Breast epithelium (tissue), 4 donors: ENCODE measurements at regions of chr1 and their contacts with region 1.

Region 1: DNA sequence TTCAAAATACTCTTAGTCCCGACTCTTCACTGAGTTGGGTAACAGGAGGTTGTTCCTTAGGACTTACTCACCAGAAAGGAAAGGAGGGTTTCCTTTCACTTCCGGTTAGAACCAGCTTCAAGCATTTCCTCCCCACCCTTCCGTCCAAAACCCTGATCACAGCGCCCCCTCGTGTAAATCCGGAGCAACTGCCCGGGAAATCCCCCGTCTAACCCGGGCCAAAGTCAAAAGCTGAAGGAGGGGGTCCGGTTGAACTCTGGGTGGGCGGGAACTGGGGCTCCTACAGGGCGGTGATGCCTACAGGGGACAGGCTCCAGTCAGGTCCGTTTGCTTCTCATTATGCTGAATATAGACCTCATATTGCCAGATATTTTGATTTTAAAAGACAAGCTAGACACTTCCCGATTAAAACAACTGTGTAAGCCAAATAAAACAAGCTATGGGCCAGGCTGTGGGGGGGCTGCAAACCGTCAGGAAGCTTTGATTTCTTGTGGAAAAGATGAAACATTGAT is 15.0 kb upstream of the MTARC2 start:
- DNase-seq: peak; percentile 47 to 78
- H3K4me3 ChIP-seq: peak overlapping the region; percentile 15 to 59 (median 32)
- H3K27ac ChIP-seq: peak overlapping the region; percentile 72 to 90
- H3K4me1 ChIP-seq: no peaks in the 10 kb centered on the region
- H3K27me3 ChIP-seq: no peaks in the 10 kb centered on the region
- CTCF ChIP-seq: peak; percentile 82 to 89 (median 87)
- POLR2A ChIP-seq: no peak

Region 2: GRCh38 chr1:220690140-220691025 is 42.8 kb before region 1 on chr1 and contains the start of gene C1orf115:
- intact Hi-C with region 1: loop called (anchors 5 kb)
- DNase-seq: peak; percentile 62 to 82
- H3K4me3 ChIP-seq: peak within 1 kb of the TSS; percentile 69 to 88 (median 78)
- H3K27ac ChIP-seq: peak within 1 kb of the TSS; percentile 75 to 80
- H3K4me1 ChIP-seq: peaks cover 3 to 4% of the 10 kb centered on the region in 2 donors
- H3K27me3 ChIP-seq: no peaks in the 10 kb centered on the region
- CTCF ChIP-seq: peak; percentile 89 to 95 (median 89)
- POLR2A ChIP-seq: no peak
- total RNA-seq, gene C1orf115: 29.3 to 44.6 (median 38.1) TPM